MCF 10A (cell line): ENCODE measurements at regions of chr21 and their contacts with region 1.

Region 1: GRCh38 chr21:18298228-18298627 is 53.6 kb downstream of the CHODL start:
- DNase-seq: peak; percentile 11
- H3K4me3 Mint-ChIP-seq: no peak overlapping the region
- H3K27ac Mint-ChIP-seq: no peak overlapping the region
- H3K4me1 Mint-ChIP-seq: no peaks in the 10 kb centered on the region
- H3K27me3 Mint-ChIP-seq: peaks cover 12% of the 10 kb centered on the region
- CTCF ChIP-seq: no peak

Region 2: DNA sequence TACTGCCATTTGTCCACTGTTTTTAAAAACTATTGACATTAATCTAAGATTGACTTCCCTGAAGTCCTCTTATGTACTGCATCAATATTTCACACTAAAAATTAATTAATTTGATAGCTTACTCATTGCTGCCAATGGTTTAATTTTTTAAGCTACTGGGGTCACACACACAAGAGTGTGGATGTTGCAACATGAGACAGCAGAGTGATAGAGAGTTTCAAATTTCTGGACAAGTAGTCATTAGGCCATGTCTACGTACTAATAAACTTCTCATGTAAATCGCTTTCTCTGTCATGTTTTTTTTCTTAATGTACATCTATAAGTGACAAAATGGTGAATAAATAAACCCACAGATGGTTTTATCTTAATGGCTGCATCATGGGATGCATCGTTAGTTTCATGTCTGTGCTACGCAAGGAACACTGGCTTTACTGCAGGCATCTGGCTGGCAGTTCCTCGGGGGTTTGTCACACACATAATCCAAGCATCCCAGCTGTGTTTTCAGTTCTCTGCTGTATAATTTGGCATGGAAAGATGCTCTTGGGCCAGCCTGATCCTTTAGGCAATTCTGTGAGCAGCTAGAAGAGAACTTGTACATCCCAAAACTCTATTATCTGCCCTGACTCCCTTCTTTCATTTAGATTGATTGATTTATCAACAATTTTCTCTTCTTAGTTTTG is 70.0 kb before region 1 on chr21:
- CTCF ChIA-PET with region 1: no interaction called
- POLR2A ChIA-PET with region 1: no interaction called
- intact Hi-C with region 1: no loop called
- DNase-seq: no peak
- H3K4me3 Mint-ChIP-seq: no peak overlapping the region
- H3K27ac Mint-ChIP-seq: no peak overlapping the region
- H3K4me1 Mint-ChIP-seq: no peaks in the 10 kb centered on the region
- H3K27me3 Mint-ChIP-seq: no peaks in the 10 kb centered on the region
- CTCF ChIP-seq: no peak

Region 3: GRCh38 chr21:18369115-18369514 is 70.9 kb after region 1 on chr21:
- CTCF ChIA-PET with region 1: interaction called, 14 read pairs
- POLR2A ChIA-PET with region 1: interaction called, 5 read pairs
- intact Hi-C with region 1: loop called (anchors 1 kb)
- DNase-seq: peak; percentile 65
- H3K4me3 Mint-ChIP-seq: no peak overlapping the region
- H3K27ac Mint-ChIP-seq: no peak overlapping the region
- H3K4me1 Mint-ChIP-seq: no peaks in the 10 kb centered on the region
- H3K27me3 Mint-ChIP-seq: no peaks in the 10 kb centered on the region
- CTCF ChIP-seq: peak; percentile 20

Region 4: DNA sequence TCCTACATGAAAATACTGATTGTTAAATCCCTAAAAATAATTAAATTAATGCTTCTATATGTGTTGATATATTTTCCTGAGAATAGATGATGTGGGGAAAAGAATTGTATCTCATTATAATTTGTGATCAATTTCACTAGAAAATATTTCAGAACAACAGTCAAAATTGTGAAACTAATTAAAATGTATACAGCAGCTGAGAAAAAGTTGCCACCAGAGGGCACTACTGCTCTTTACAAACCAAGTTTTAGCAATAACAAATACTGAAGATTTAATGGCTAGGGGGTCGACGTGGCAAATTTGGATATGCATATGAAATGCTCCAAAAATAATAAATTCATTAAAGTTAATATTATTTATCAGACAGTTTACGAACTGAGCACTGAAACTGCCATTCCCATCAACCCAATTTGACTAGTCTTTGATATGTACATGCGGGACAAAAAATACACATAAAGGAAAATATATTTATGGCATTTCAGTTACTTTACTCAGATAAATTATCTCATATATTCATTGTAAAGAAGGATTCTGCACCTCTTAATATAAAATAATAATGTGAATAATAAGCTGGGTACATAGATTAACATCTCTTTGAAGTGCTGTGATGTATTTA is 201.6 kb after region 1 on chr21:
- CTCF ChIA-PET with region 1: no interaction called
- POLR2A ChIA-PET with region 1: no interaction called
- intact Hi-C with region 1: loop called (anchors 5 kb)
- DNase-seq: peak; percentile 56
- H3K4me3 Mint-ChIP-seq: no peak overlapping the region
- H3K27ac Mint-ChIP-seq: no peak overlapping the region
- H3K4me1 Mint-ChIP-seq: no peaks in the 10 kb centered on the region
- H3K27me3 Mint-ChIP-seq: no peaks in the 10 kb centered on the region
- CTCF ChIP-seq: peak; percentile 67